Caco-2 (cell line): ENCODE measurements at regions of chr5 and their contacts with region 1.

Region 1: DNA sequence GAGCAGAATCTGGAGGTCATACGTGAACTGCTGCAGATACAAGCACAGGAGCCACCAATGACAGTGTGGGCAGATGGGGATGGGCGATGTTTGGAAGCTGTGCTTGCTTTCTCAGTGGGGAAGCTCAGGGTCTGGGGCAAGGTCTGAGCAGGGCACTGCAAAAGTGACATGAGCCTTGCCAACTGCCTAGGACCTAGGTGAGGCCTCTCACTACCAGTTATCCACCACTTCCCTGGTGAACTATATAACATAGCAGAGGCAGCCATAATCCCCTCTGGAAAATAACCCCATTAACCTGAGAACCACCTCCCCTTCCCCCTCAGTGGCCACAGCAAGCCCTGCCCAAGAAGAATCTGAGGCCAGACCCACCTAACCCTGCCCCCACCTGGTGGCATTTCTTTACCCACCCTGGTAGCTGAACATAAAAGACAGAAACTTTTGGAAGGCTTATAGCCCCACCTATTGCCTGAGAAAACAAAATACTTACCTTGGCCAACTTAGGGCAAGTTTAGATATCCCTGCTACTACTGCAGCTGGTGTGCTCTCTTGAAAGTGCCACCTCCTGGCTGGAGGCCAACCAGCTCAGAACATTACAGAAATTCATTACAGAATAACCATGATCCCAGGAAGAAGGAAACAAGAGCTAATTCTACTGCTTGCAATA is 18.8 kb upstream of the SPEF2 start:
- DNase-seq: peak in 1 of 2 experiments; percentile 8
- H3K4me3 ChIP-seq: no peak overlapping the region
- H3K4me3 Mint-ChIP-seq: no peak overlapping the region
- H3K27ac Mint-ChIP-seq: no peak overlapping the region
- H3K4me1 ChIP-seq: no peaks in the 10 kb centered on the region
- H3K4me1 Mint-ChIP-seq: no peaks in the 10 kb centered on the region
- H3K27me3 ChIP-seq: no peaks in the 10 kb centered on the region
- H3K27me3 Mint-ChIP-seq: peaks cover 5% of the 10 kb centered on the region
- CTCF ChIP-seq: peak; percentile 13 to 24

Region 2: GRCh38 chr5:35345222-35345621 is 253.6 kb before region 1 on chr5:
- CTCF ChIA-PET with region 1: no interaction called
- POLR2A ChIA-PET with region 1: no interaction called
- intact Hi-C with region 1: loop called (anchors 10 kb)
- DNase-seq: peak in 1 of 2 experiments; percentile 17
- H3K4me3 ChIP-seq: no peak overlapping the region
- H3K4me3 Mint-ChIP-seq: no peak overlapping the region
- H3K27ac Mint-ChIP-seq: no peak overlapping the region
- H3K4me1 ChIP-seq: no peaks in the 10 kb centered on the region
- H3K4me1 Mint-ChIP-seq: no peaks in the 10 kb centered on the region
- H3K27me3 ChIP-seq: no peaks in the 10 kb centered on the region
- H3K27me3 Mint-ChIP-seq: no peaks in the 10 kb centered on the region
- CTCF ChIP-seq: peak in 1 of 2 experiments; percentile 22